ENCODE measurements at regions of chr16 and their contacts with region 1.

Region 1: DNA sequence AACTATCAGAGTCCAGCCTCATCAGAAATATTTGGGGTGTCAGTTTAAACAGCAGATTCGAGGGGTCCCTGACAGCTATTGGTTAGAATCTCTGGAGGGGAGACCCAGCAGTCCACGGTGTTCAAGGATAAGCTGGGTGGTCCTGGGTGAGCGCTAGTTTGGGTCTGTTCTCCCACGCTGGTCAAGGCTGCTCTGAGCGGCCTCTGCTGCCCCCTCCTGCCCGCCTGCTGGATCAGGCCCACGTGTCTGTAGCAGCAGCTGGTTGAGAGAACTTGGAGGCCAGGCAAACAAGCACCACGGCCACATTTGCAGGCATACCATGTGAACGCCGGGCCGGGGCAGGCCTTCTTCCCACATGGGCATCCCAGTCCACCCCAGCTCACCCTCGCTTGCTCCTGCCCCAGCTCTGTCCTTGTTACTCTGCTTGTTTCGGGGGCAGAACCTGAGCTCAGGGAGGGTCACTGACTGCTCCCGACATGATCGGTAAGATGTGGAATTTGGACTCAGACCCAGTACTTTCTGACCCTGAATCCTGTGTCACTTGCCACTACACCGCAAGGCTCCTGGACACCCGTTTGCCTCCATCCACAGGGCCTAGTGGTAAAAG is 7.4 kb downstream of the FOXF1 start:
- DNase-seq: peak; percentile 70

Region 2: GRCh38 chr16:86072328-86073102 is 445.2 kb before region 1 on chr16:
- CTCF ChIA-PET with region 1: interaction called, 14 read pairs
- POLR2A ChIA-PET with region 1: no interaction called
- DNase-seq: peak; percentile 72

Region 3: GRCh38 chr16:86252596-86252995 is 265.2 kb before region 1 on chr16:
- CTCF ChIA-PET with region 1: interaction called, 41 read pairs
- POLR2A ChIA-PET with region 1: interaction called, 3 read pairs
- DNase-seq: peak; percentile 72

Region 4: GRCh38 chr16:86634292-86634691 is 116.5 kb after region 1 on chr16:
- CTCF ChIA-PET with region 1: no interaction called
- POLR2A ChIA-PET with region 1: no interaction called
- DNase-seq: peak; percentile 45